PC-3 (cell line): ENCODE measurements at regions of chr11 and their contacts with region 1.

Region 1: GRCh38 chr11:62705880-62706849 is 1.1 kb downstream of the BSCL2 start:
- DNase-seq: peak; percentile 97
- ATAC-seq: peak; percentile 89
- H3K4me3 ChIP-seq: peak overlapping the region; percentile 87
- H3K27ac ChIP-seq: peak overlapping the region; percentile 54
- H3K4me1 ChIP-seq: peaks cover 17% of the 10 kb centered on the region
- H3K27me3 ChIP-seq: no peaks in the 10 kb centered on the region
- CTCF ChIP-seq: no peak

Region 2: GRCh38 chr11:62535802-62536201 is 170.4 kb before region 1 on chr11:
- CTCF ChIA-PET with region 1: no interaction called
- POLR2A ChIA-PET with region 1: no interaction called
- intact Hi-C with region 1: no loop called
- DNase-seq: no peak
- ATAC-seq: no peak
- H3K4me3 ChIP-seq: no peak overlapping the region
- H3K27ac ChIP-seq: no peak overlapping the region
- H3K4me1 ChIP-seq: peaks cover 29% of the 10 kb centered on the region
- H3K27me3 ChIP-seq: no peaks in the 10 kb centered on the region
- CTCF ChIP-seq: no peak

Region 3: DNA sequence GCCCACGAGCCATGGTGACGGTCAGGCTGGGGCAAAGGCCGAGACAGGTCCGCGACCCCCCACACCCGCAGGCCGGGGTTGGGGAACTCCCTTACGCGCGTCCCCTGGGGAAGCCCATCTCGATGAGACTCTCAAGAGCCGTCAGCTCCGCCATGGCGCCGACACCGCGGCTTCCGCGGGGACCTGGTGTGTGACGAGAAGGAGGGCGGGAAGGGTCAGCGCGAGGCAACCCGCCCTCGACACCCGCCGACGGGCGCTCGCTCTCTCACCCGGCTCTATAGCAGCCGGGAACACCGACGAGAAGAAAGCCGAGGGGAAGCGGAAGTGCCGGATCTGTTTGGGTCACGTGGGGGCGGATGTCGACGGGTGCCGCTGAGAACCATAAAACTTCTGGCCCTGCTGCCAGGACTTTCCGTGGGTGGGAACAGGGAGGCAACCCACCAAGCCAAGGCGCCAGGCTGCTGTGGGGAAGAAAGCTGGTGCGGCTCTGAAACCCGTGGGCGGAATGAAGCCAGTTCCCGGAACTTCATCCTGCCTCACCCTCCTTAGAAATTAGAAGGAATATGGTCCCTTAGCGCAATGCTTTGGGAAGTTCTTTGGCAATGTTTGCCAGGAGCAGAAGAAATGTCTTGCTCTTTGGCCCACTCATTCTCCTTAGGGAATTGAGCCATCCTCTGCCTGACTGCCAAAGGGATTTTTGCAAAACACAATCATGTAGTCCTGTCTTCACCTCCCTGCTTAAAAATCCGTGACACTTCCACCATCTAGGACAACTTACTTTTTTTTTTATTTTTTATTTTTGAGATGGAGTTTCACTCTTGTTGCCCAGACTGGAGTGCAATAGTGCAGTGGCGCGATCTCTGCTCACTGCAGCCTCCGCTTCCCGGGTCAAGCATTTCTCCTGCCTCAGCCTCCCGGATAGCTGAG is 27.1 kb before region 1 on chr11 and contains the start of gene UBXN1:
- CTCF ChIA-PET with region 1: interaction called, 11 read pairs
- POLR2A ChIA-PET with region 1: interaction called, 19 read pairs
- intact Hi-C with region 1: no loop called
- DNase-seq: peak; percentile 86
- ATAC-seq: peak; percentile 62
- H3K4me3 ChIP-seq: peak within 1 kb of the TSS; percentile 98
- H3K27ac ChIP-seq: peak within 1 kb of the TSS; percentile 53
- H3K4me1 ChIP-seq: peaks cover 23% of the 10 kb centered on the region
- H3K27me3 ChIP-seq: no peaks in the 10 kb centered on the region
- CTCF ChIP-seq: no peak
- total RNA-seq, gene UBXN1: 190 and 311 TPM in 2 replicates

Region 4: GRCh38 chr11:62771144-62772021 is 65.2 kb after region 1 on chr11 and contains the start of gene TAF6L:
- CTCF ChIA-PET with region 1: no interaction called
- POLR2A ChIA-PET with region 1: interaction called, 11 read pairs
- intact Hi-C with region 1: no loop called
- DNase-seq: peak; percentile 99
- ATAC-seq: peak; percentile 92
- H3K4me3 ChIP-seq: peak within 1 kb of the TSS; percentile 74
- H3K27ac ChIP-seq: peak within 1 kb of the TSS; percentile 76
- H3K4me1 ChIP-seq: peaks cover 13% of the 10 kb centered on the region
- H3K27me3 ChIP-seq: no peaks in the 10 kb centered on the region
- CTCF ChIP-seq: no peak
- total RNA-seq, gene TAF6L: 40.2 and 43.9 TPM in 2 replicates